Right ventricle myocardium inferior (tissue), 1 donor: ENCODE measurements at regions of chr4 and their contacts with region 1.

Region 1: DNA sequence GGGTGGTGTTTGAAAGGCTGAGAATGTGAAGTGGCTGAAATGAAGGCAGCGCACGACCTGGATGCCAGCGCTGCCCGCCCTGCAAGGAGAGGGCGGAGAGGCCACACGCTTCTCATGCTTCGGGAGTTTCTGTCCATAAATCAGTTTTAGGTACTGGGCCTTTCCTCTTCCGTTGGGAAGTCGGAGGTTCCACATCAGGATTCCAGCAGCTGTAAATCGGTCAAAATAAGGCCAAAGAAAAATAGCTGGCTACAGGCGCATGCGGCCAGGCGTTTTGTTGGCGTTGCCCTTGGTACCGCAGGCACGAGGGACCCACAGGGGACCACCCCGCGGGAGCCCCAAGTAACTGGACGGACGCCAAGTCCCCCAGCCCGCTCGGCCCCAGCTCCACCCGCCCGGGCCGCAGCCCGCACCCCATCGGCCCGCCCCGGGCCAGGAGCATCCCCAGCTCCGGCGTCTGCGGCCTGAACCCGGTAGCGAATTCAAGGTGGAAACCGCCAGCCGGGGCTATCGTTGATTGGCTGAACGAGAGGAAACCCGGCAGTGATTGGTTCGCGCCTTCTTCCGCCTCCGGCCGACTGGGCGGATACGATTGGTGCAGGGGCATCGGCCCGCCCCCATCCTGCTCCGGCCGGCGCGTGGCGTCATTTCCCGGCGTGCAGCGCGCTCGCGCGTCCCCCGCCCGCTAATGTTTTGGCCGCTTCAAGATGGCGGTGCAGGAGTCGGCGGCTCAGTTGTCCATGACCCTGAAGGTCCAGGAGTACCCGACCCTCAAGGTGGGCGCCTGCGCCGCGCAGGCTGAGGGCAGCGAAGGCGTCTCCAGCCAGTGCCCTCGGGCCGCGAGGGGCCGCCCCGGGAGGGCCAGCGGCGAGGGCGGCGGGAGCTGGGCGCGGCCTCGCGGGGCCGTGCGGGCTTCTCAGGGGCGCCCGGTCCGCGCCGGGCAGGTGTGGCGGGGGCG is at the start of gene MAEA:
- DNase-seq: peak; percentile 97
- ATAC-seq: peak; percentile 98
- total RNA-seq, gene MAEA: 50.4 TPM

Region 2: GRCh38 chr4:1346781-1347409 is 57.4 kb after region 1 on chr4 and contains the start of gene UVSSA:
- intact Hi-C with region 1: loop called (anchors 2 kb)
- DNase-seq: peak; percentile 100
- ATAC-seq: peak; percentile 98
- total RNA-seq, gene UVSSA: 6.5 TPM